OCI-LY7 (cell line): ENCODE measurements at regions of chr17 and their contacts with region 1.

Region 1: GRCh38 chr17:48131216-48131824 is 23.8 kb downstream of the SNX11 start:
- DNase-seq: peak; percentile 77
- H3K4me3 ChIP-seq: no peak overlapping the region
- H3K27ac ChIP-seq: no peak overlapping the region
- H3K4me1 ChIP-seq: no peaks in the 10 kb centered on the region
- CTCF ChIP-seq: peak; percentile 96

Region 2: GRCh38 chr17:48074315-48075081 is 56.8 kb before region 1 on chr17:
- CTCF ChIA-PET with region 1: no interaction called
- POLR2A ChIA-PET with region 1: no interaction called
- intact Hi-C with region 1: no loop called
- DNase-seq: peak; percentile 75
- H3K4me3 ChIP-seq: no peak overlapping the region
- H3K27ac ChIP-seq: no peak overlapping the region
- H3K4me1 ChIP-seq: no peaks in the 10 kb centered on the region
- CTCF ChIP-seq: peak; percentile 92

Region 3: GRCh38 chr17:48084932-48085444 is 46.3 kb before region 1 on chr17:
- CTCF ChIA-PET with region 1: no interaction called
- POLR2A ChIA-PET with region 1: interaction called, 3 read pairs
- intact Hi-C with region 1: loop called (anchors 1 kb)
- DNase-seq: no peak
- H3K4me3 ChIP-seq: no peak overlapping the region
- H3K27ac ChIP-seq: no peak overlapping the region
- H3K4me1 ChIP-seq: peaks cover 11% of the 10 kb centered on the region
- CTCF ChIP-seq: no peak

Region 4: GRCh38 chr17:48363161-48363560 is 231.8 kb after region 1 on chr17:
- CTCF ChIA-PET with region 1: no interaction called
- POLR2A ChIA-PET with region 1: no interaction called
- intact Hi-C with region 1: no loop called
- DNase-seq: no peak
- H3K4me3 ChIP-seq: no peak overlapping the region
- H3K27ac ChIP-seq: no peak overlapping the region
- H3K4me1 ChIP-seq: peaks cover 5% of the 10 kb centered on the region
- CTCF ChIP-seq: no peak